GM12878 (cell line): ENCODE measurements at regions of chr9 and their contacts with region 1.

Region 1: GRCh38 chr9:13088720-13089427 is 190.6 kb downstream of the MPDZ start:
- DNase-seq: no peak
- ATAC-seq: peak; percentile 77
- H3K4me3 ChIP-seq: no peak overlapping the region
- H3K27ac ChIP-seq: no peak overlapping the region
- H3K4me1 ChIP-seq: no peaks in the 10 kb centered on the region
- H3K27me3 ChIP-seq: no peaks in the 10 kb centered on the region
- CTCF ChIP-seq: peak; percentile 46 to 74 (median 62)
- EP300 ChIP-seq: no peak
- POLR2A ChIP-seq: no peak
- RAD21 ChIP-seq: peak; percentile 58

Region 2: DNA sequence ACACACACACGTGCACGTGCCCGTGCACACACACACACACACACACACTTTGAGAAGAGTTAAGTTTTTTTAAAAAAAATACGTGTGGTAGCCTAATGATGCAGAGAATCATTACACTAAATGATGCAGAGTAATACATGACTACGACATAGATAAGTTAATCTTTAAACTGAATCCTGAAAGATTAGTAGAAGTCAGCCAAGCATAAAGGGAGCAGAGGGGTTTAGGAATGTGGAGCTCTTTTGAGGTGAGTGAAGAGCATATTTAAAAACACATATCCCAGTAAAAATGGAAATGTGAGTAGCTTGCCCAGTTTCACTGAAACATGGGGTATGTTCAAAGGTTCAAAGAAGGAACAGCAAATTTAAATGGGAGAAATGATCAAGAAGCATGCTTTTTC is 457.0 kb before region 1 on chr9:
- CTCF ChIA-PET with region 1: no interaction called
- POLR2A ChIA-PET with region 1: no interaction called
- RAD21 ChIA-PET with region 1: no interaction called
- SMC1A ChIA-PET with region 1: no interaction called
- in situ Hi-C with region 1: no loop called
- intact Hi-C with region 1: loop called (anchors 10 kb)
- DNase-seq: no peak
- ATAC-seq: no peak
- H3K4me3 ChIP-seq: no peak overlapping the region
- H3K27ac ChIP-seq: no peak overlapping the region
- H3K4me1 ChIP-seq: no peaks in the 10 kb centered on the region
- H3K27me3 ChIP-seq: no peaks in the 10 kb centered on the region
- CTCF ChIP-seq: no peak
- EP300 ChIP-seq: no peak
- POLR2A ChIP-seq: no peak
- RAD21 ChIP-seq: no peak

Region 3: DNA sequence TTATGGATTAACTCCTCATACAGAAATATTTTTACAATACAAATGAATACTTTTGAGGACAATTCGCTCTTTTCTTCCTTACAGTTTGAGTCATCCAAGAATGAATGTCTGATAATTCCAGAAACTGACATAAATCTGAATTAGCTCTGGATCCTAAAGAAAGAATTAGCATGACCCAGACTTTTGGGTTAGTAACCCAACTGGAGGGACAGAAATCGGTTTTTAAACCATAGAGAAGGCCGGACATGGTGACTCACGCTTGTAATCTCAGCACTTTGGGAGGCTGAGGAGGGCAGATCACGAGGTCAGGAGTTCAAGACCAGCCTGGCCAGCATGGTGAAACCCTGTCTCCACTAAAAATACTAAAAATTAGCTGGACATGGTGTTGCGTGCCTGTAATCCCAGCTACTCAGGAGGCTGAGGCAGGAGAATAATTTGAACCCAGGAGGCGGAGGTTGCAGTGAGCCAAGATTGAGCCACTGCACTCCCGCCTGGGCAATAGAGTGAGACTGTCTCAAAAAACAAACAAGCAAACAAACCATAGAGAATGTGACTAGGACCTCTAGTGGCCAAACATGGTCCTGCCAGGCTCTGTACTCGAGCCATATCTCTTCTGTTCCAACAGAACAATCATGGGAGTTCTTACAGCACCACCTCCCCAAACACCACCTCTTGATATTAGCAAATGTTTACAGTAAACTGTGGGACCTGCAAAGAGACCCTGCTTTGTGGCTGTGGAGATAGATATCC is 269.3 kb before region 1 on chr9:
- CTCF ChIA-PET with region 1: no interaction called
- POLR2A ChIA-PET with region 1: no interaction called
- RAD21 ChIA-PET with region 1: no interaction called
- SMC1A ChIA-PET with region 1: no interaction called
- in situ Hi-C with region 1: no loop called
- intact Hi-C with region 1: loop called (anchors 5 kb)
- DNase-seq: no peak
- ATAC-seq: peak; percentile 88
- H3K4me3 ChIP-seq: no peak overlapping the region
- H3K27ac ChIP-seq: no peak overlapping the region
- H3K4me1 ChIP-seq: no peaks in the 10 kb centered on the region
- H3K27me3 ChIP-seq: no peaks in the 10 kb centered on the region
- CTCF ChIP-seq: peak; percentile 45 to 68 (median 55)
- EP300 ChIP-seq: no peak
- POLR2A ChIP-seq: no peak
- RAD21 ChIP-seq: peak; percentile 47; the same call in 1 of the 2 replicates

Region 4: GRCh38 chr9:12884737-12885414 is 204.0 kb before region 1 on chr9:
- CTCF ChIA-PET with region 1: no interaction called
- POLR2A ChIA-PET with region 1: no interaction called
- RAD21 ChIA-PET with region 1: no interaction called
- SMC1A ChIA-PET with region 1: no interaction called
- in situ Hi-C with region 1: no loop called
- intact Hi-C with region 1: loop called (anchors 10 kb)
- DNase-seq: no peak
- ATAC-seq: peak; percentile 38; the same call in 2 of the 3 replicates
- H3K4me3 ChIP-seq: no peak overlapping the region
- H3K27ac ChIP-seq: no peak overlapping the region
- H3K4me1 ChIP-seq: no peaks in the 10 kb centered on the region
- H3K27me3 ChIP-seq: no peaks in the 10 kb centered on the region
- CTCF ChIP-seq: peak in 2 of 3 experiments; percentile 6 to 40; a peak in 3 of 6 replicates
- EP300 ChIP-seq: no peak
- POLR2A ChIP-seq: no peak
- RAD21 ChIP-seq: peak; percentile 39; the same call in 1 of the 2 replicates

Region 5: DNA sequence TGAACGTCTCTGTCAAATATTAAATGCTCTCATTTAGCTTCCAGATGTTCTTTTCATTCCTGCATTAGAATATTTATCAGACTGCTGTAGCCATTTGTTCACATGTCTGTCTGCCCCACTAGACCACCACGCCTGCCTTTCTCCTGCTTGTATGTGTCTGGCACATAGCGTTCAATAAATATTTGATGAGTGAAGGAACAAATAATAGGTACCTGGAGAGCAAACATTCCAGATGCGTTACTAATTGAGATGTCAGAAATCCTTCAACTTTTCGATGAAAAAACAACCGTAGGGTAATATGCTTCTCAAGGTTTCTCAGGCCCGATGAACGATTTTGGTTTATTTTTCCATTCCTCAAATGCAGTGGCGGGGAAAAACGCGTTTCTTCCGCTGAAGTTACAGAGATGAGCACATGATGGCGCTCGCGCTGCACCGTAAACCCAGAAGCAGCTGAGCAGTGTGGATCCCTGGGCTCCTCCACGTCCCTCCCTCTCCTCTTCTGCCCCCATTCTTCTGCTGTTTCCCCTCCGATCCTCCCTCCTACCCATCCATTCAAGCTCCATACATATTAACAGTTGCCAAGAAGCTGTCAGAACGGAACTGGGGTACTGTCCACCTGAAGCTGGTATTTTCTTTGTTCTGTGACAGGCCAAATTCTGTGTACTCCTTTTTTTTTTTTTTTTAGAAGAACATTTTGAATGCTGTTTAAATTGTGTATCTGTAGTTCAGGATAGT is 54.7 kb before region 1 on chr9:
- CTCF ChIA-PET with region 1: interaction called, 25 read pairs
- POLR2A ChIA-PET with region 1: no interaction called
- RAD21 ChIA-PET with region 1: interaction called, 12 read pairs
- SMC1A ChIA-PET with region 1: interaction called, 9 read pairs
- in situ Hi-C with region 1: no loop called
- intact Hi-C with region 1: loop called (anchors 2 kb)
- DNase-seq: no peak
- ATAC-seq: peak; percentile 63
- H3K4me3 ChIP-seq: no peak overlapping the region
- H3K27ac ChIP-seq: no peak overlapping the region
- H3K4me1 ChIP-seq: no peaks in the 10 kb centered on the region
- H3K27me3 ChIP-seq: no peaks in the 10 kb centered on the region
- CTCF ChIP-seq: peak; percentile 40 to 61 (median 54); a peak in 5 of 6 replicates
- EP300 ChIP-seq: no peak
- POLR2A ChIP-seq: no peak
- RAD21 ChIP-seq: peak; percentile 50

Region 6: GRCh38 chr9:13137426-13137825 is 48.6 kb after region 1 on chr9:
- CTCF ChIA-PET with region 1: no interaction called
- POLR2A ChIA-PET with region 1: no interaction called
- RAD21 ChIA-PET with region 1: no interaction called
- SMC1A ChIA-PET with region 1: no interaction called
- in situ Hi-C with region 1: no loop called
- intact Hi-C with region 1: no loop called
- DNase-seq: no peak
- ATAC-seq: no peak
- H3K4me3 ChIP-seq: no peak overlapping the region
- H3K27ac ChIP-seq: no peak overlapping the region
- H3K4me1 ChIP-seq: no peaks in the 10 kb centered on the region
- H3K27me3 ChIP-seq: no peaks in the 10 kb centered on the region
- CTCF ChIP-seq: no peak
- EP300 ChIP-seq: no peak
- POLR2A ChIP-seq: no peak
- RAD21 ChIP-seq: no peak